ENCODE measurements at regions of chr2 and their contacts with region 1.

Region 1: GRCh38 chr2:103161456-103162289 is 399.8 kb downstream of the TMEM182 start:
- DNase-seq: no peak
- H3K4me3 ChIP-seq: no peak overlapping the region
- H3K4me3 Mint-ChIP-seq: no peak overlapping the region
- H3K27ac ChIP-seq: no peak overlapping the region
- H3K27ac Mint-ChIP-seq: no peak overlapping the region
- H3K4me1 ChIP-seq: no peaks in the 10 kb centered on the region
- H3K4me1 Mint-ChIP-seq: no peaks in the 10 kb centered on the region
- H3K27me3 ChIP-seq: no peaks in the 10 kb centered on the region
- H3K27me3 Mint-ChIP-seq: peaks cover 2 to 7% (median 3%) of the 10 kb centered on the region in 3 donors
- CTCF ChIP-seq: peak; percentile 26

Region 2: GRCh38 chr2:104872866-104873688 is 1711.4 kb after region 1 on chr2:
- intact Hi-C with region 1: loop called in 1 of 2 experiments (anchors 10 kb)
- DNase-seq: peak; percentile 45 to 64 (median 53)
- H3K4me3 ChIP-seq: peak overlapping the region; percentile 7 to 76 (median 33)
- H3K4me3 Mint-ChIP-seq: peak overlapping the region; percentile 68 to 88
- H3K27ac ChIP-seq: no peak overlapping the region
- H3K27ac Mint-ChIP-seq: no peak overlapping the region
- H3K4me1 ChIP-seq: peaks cover 14 to 17% of the 10 kb centered on the region in 2 donors
- H3K4me1 Mint-ChIP-seq: peaks cover 24% of the 10 kb centered on the region
- H3K27me3 ChIP-seq: peaks cover 44 to 72% of the 10 kb centered on the region in 2 donors
- H3K27me3 Mint-ChIP-seq: peaks cover 65 to 77% (median 70%) of the 10 kb centered on the region in 3 donors
- CTCF ChIP-seq: peak; percentile 66

Measured in CD14-positive monocyte (primary cell).